Activated T-helper 2 cell treated with anti-CD3 and anti-CD28 coated beads, Interferon-gamma antibody, Interleukin-2, Interleukin-4, amounts not matched to agents 10 μg/mL and 5 μg/mL and 100 μg/mL, durations not matched to agents 14 hours and 24 hours and 36 hours (primary cell): ENCODE measurements at regions of chr2 and their contacts with region 1.

Region 1: GRCh38 chr2:195533771-195534642 is 123.0 kb upstream of the SLC39A10 start:
- DNase-seq: peak; percentile 51
- H3K4me3 Mint-ChIP-seq: peak overlapping the region; percentile 70
- H3K27ac Mint-ChIP-seq: peak overlapping the region; percentile 86
- H3K4me1 Mint-ChIP-seq: peaks cover 80% of the 10 kb centered on the region
- H3K27me3 Mint-ChIP-seq: no peaks in the 10 kb centered on the region

Region 2: GRCh38 chr2:195407782-195408181 is 126.2 kb before region 1 on chr2:
- intact Hi-C with region 1: loop called (anchors 5 kb)
- DNase-seq: no peak
- H3K4me3 Mint-ChIP-seq: no peak overlapping the region
- H3K27ac Mint-ChIP-seq: no peak overlapping the region
- H3K4me1 Mint-ChIP-seq: peaks cover 31% of the 10 kb centered on the region
- H3K27me3 Mint-ChIP-seq: no peaks in the 10 kb centered on the region

Region 3: DNA sequence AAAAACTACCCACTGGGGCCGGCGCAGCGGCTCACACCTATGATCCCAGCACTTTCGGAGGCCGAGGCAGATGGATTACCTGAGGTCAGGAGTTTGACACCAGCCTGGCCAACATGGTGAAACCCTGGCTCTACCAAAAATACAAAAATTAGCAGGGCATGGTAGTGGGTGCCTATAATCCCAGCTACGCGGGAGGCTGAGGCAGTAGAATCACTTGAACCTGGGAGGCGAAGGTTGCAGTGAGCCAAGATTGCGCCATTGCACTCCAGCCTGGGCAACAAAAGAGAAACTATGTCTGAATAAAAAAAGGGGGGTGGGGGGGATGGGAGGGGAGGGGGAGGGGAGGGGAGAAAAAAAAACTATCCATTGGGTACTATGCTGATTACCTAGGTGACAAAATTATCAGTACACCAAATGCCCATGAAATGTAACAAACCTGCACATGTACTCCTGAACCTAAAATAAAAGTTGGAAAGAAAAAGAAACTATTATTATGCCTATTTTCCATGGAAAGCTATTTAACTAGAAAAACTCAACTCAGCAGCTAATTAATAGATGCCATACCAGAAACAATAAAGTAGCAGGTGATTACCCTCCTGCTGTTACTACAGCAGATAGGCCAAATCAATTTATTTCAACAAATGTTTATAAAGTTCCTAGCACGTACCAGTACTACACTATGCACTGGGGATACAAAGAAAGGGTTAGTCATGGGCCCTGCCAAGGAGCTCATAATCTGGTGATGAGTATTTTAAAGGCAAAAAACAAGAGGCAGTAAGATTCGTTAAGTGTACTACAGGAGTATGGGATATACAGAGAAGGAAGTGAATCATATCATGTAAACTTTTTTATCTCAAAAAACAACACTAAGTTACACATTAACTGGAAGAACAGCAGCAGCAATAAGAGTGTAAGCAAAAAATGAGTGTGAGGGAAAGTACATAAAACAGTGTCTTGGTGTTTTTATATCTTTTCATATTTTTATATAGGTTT is 10.2 kb after region 1 on chr2:
- intact Hi-C with region 1: loop called (anchors 1 kb)
- DNase-seq: no peak
- H3K4me3 Mint-ChIP-seq: peak overlapping the region; percentile 43
- H3K27ac Mint-ChIP-seq: peak overlapping the region; percentile 71
- H3K4me1 Mint-ChIP-seq: peaks cover 57% of the 10 kb centered on the region
- H3K27me3 Mint-ChIP-seq: no peaks in the 10 kb centered on the region

Region 4: GRCh38 chr2:195575879-195576401 is 41.9 kb after region 1 on chr2:
- intact Hi-C with region 1: loop called (anchors 5 kb)
- DNase-seq: no peak
- H3K4me3 Mint-ChIP-seq: no peak overlapping the region
- H3K27ac Mint-ChIP-seq: no peak overlapping the region
- H3K4me1 Mint-ChIP-seq: peaks cover 49% of the 10 kb centered on the region
- H3K27me3 Mint-ChIP-seq: no peaks in the 10 kb centered on the region

Region 5: GRCh38 chr2:195594248-195594647 is 60.2 kb after region 1 on chr2:
- intact Hi-C with region 1: no loop called
- DNase-seq: no peak
- H3K4me3 Mint-ChIP-seq: no peak overlapping the region
- H3K27ac Mint-ChIP-seq: no peak overlapping the region
- H3K4me1 Mint-ChIP-seq: peaks cover 19% of the 10 kb centered on the region
- H3K27me3 Mint-ChIP-seq: no peaks in the 10 kb centered on the region

Region 6: DNA sequence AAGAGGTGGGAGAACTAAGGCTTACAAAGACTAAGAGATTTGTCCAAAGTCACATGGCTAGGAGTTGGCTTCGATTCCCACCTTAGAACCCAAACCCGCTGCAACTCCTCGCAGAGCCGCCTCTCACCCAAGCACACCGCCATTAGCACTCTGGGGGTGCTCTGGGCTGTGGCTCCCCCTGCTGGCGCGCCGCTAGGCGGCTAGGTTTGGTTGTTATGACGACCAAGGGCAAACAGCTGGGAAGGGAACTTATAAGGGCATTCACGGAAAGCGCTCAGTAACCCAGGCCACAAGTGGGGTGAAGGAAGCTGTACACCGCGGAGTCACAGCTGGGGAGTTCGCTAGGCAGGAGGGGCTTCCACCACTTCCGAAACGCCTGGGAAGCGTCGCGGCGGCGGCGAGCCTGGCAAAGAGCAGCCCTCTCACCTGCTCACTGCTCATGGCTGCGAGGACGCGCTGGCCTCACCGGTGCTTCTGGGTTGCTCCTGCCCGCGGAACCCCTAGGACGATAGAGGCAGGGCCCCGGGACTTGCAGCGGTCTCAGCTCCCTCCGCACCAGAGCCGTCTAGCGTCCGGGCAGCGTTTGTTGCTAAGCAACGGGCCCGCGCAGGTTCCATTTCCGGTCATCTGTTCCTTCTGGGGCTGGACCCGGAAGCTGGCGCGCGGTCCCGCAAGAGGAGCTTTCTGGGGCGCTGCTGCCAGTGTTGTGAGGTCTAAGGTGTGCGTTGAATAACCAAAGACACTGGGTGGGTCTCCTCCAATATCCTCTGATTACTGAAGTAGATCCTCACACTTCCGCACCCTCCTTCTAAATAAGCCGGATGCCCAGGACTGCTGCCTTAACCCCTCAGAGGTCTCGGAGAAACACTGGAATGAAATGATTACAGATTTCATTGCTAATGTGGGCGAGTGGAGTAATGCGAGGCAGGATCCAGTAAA is 534.5 kb after region 1 on chr2 and contains the start of gene DNAH7:
- intact Hi-C with region 1: loop called (anchors 10 kb)
- DNase-seq: peak; percentile 89
- H3K4me3 Mint-ChIP-seq: peak within 1 kb of the TSS; percentile 85
- H3K27ac Mint-ChIP-seq: peak within 1 kb of the TSS; percentile 69
- H3K4me1 Mint-ChIP-seq: peaks cover 3% of the 10 kb centered on the region
- H3K27me3 Mint-ChIP-seq: peaks cover 15% of the 10 kb centered on the region
- total RNA-seq, gene DNAH7: not detected in 2 replicates

Region 7: DNA sequence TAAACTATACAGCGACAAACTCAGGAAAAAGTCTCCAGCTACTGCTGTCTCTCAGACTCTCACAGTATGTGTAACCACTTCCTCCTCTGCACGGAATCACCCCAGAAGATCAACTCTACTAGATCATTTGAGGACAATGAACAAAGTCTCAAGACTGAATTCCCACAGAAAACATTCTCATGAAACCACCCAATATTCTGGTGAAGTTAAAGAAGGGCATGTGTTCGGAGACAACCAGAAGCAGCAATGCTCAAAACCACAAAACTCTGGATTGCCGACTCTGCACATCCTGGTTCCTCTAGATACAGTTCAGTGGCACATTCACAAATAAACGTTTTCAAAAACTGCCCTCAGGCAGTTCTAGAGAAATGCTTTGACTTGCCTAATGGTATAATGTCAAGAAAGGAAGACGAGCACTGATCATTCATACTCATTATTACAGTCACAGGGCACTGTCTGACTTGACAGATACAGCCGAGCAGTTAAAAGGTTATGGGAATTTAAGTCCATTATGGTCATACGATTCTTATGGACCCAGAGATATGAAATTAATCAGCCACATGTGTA is 729.3 kb after region 1 on chr2:
- intact Hi-C with region 1: loop called (anchors 10 kb)
- DNase-seq: peak; percentile 52
- H3K4me3 Mint-ChIP-seq: peak overlapping the region; percentile 72
- H3K27ac Mint-ChIP-seq: peak overlapping the region; percentile 94
- H3K4me1 Mint-ChIP-seq: peaks cover 68% of the 10 kb centered on the region
- H3K27me3 Mint-ChIP-seq: no peaks in the 10 kb centered on the region

Region 8: GRCh38 chr2:196926562-196927375 is 1392.8 kb after region 1 on chr2 and contains the start of gene PGAP1:
- intact Hi-C with region 1: loop called (anchors 10 kb)
- DNase-seq: peak; percentile 84
- H3K4me3 Mint-ChIP-seq: peak within 1 kb of the TSS; percentile 100
- H3K27ac Mint-ChIP-seq: peak within 1 kb of the TSS; percentile 99
- H3K4me1 Mint-ChIP-seq: peaks cover 35% of the 10 kb centered on the region
- H3K27me3 Mint-ChIP-seq: no peaks in the 10 kb centered on the region
- total RNA-seq, gene PGAP1: 31.2 and 31.4 TPM in 2 replicates